Panc1 (cell line): ENCODE measurements at regions of chr5 and their contacts with region 1.

Region 1: DNA sequence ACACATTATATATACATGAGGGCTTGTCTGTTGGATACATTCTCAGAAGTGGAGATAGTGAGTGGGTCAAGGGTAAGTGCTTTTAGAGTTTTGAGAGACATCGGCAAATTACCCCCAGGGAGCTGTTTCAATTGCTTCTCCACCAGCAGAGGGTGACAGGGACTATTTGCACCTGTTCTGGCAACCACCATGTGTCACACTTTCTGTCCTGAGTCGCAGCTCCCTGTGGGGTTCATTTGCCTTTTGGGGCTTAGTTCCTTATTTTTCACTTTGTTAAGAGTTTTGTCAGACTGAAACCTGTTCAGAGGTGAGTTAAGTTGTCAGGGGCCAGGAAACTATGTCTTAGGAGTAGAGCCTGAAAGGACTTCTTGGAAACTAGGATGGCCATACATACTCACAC is 20.1 kb upstream of the SLC36A1 start:
- DNase-seq: no peak
- ATAC-seq: no peak
- H3K4me3 ChIP-seq: no peak overlapping the region
- H3K27ac ChIP-seq: no peak overlapping the region
- H3K4me1 ChIP-seq: no peaks in the 10 kb centered on the region
- H3K27me3 ChIP-seq: no peaks in the 10 kb centered on the region
- CTCF ChIP-seq: no peak

Region 2: GRCh38 chr5:151383011-151383410 is 44.2 kb before region 1 on chr5:
- CTCF ChIA-PET with region 1: no interaction called
- POLR2A ChIA-PET with region 1: interaction called, 13 read pairs
- in situ Hi-C with region 1: no loop called
- intact Hi-C with region 1: no loop called
- DNase-seq: no peak
- ATAC-seq: no peak
- H3K4me3 ChIP-seq: no peak overlapping the region
- H3K27ac ChIP-seq: no peak overlapping the region
- H3K4me1 ChIP-seq: no peaks in the 10 kb centered on the region
- H3K27me3 ChIP-seq: peaks cover 4% of the 10 kb centered on the region; the same call in 1 of the 2 replicates
- CTCF ChIP-seq: no peak

Region 3: GRCh38 chr5:151405334-151406160 is 21.7 kb before region 1 on chr5:
- CTCF ChIA-PET with region 1: interaction called, 13 read pairs
- POLR2A ChIA-PET with region 1: no interaction called
- in situ Hi-C with region 1: no loop called
- intact Hi-C with region 1: no loop called
- DNase-seq: no peak
- ATAC-seq: no peak
- H3K4me3 ChIP-seq: no peak overlapping the region
- H3K27ac ChIP-seq: no peak overlapping the region
- H3K4me1 ChIP-seq: no peaks in the 10 kb centered on the region
- H3K27me3 ChIP-seq: no peaks in the 10 kb centered on the region; the same call in 1 of the 2 replicates
- CTCF ChIP-seq: no peak